ENCODE measurements at regions of chr2 and their contacts with region 1.

Region 1: DNA sequence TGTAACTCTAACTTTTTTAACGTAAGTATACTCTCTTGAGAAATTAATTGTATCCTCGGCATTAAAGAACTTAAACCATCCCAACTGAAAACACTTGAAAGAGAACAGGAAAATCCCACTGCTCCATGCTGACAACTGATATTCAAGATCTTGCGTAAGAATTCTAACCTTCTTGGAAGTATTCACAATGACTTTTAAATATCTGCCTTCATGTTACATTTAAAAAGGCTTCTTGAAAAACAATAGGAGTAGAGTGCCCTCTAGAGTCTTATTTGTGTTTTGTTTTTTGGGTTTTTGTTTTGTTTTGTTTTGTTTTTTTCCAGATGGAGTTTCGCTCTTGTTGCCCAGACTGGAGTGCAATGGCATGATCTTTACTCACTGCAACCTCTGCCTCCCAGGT is 65.4 kb upstream of the DNAJC10 start:
- DNase-seq: peak in 1 of 9 donors; percentile 15
- ATAC-seq: no peak
- H3K4me3 ChIP-seq: no peak overlapping the region
- H3K4me3 Mint-ChIP-seq: no peak overlapping the region
- H3K27ac ChIP-seq: no peak overlapping the region
- H3K27ac Mint-ChIP-seq: peak overlapping the region in 1 of 9 donors; percentile 37
- H3K4me1 ChIP-seq: no peaks in the 10 kb centered on the region
- H3K4me1 Mint-ChIP-seq: peaks cover 0 to 21% (median 9%) of the 10 kb centered on the region in 7 donors
- H3K27me3 ChIP-seq: no peaks in the 10 kb centered on the region
- H3K27me3 Mint-ChIP-seq: peaks cover 0 to 7% (median 0%) of the 10 kb centered on the region in 5 donors

Region 2: GRCh38 chr2:181742922-181743722 is 907.6 kb before region 1 on chr2:
- CTCF ChIA-PET with region 1: no interaction called
- POLR2A ChIA-PET with region 1: no interaction called
- intact Hi-C with region 1: loop called in 1 of 2 experiments (anchors 2 kb)
- DNase-seq: peak in 5 of 9 donors; percentile 17 to 35 (median 29)
- ATAC-seq: peak; percentile 49
- H3K4me3 ChIP-seq: no peak overlapping the region
- H3K4me3 Mint-ChIP-seq: no peak overlapping the region
- H3K27ac ChIP-seq: no peak overlapping the region
- H3K27ac Mint-ChIP-seq: no peak overlapping the region
- H3K4me1 ChIP-seq: no peaks in the 10 kb centered on the region
- H3K4me1 Mint-ChIP-seq: no peaks in the 10 kb centered on the region
- H3K27me3 ChIP-seq: no peaks in the 10 kb centered on the region
- H3K27me3 Mint-ChIP-seq: peaks cover 0 to 22% (median 3%) of the 10 kb centered on the region in 5 donors

Region 3: DNA sequence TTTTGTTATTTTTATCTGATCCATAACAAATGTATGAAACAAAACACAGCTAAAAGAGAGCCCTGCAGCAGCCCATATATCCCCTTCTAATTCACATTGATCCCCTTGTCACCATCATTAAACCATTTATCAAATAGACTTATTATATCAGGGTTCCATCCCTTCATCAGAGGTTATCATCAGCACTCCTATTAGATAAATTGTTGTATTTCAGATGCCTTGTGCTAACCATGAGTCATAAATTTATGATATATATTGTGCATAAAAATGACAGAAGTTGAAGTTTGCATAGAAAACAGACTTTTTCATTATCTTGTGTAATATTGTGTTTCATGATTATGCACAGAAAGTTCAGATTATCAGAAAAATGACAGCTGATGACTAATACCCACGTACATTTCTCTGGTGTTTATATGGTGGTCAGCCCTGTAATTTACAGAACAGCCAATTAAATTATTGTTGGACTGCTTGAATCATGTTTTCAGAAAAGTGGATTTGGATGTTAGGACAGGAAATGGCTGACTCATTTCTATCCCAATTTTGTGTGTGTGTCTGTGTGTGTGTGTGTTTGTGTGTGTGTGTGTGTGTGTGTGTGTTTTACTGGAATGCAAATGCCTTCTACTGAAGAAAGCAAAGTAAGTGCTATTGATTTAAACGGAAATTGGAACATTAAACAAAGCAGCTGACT is 584.2 kb before region 1 on chr2:
- CTCF ChIA-PET with region 1: no interaction called
- POLR2A ChIA-PET with region 1: no interaction called
- intact Hi-C with region 1: no loop called
- DNase-seq: no peak
- ATAC-seq: no peak
- H3K4me3 ChIP-seq: no peak overlapping the region
- H3K4me3 Mint-ChIP-seq: no peak overlapping the region
- H3K27ac ChIP-seq: no peak overlapping the region
- H3K27ac Mint-ChIP-seq: no peak overlapping the region
- H3K4me1 ChIP-seq: no peaks in the 10 kb centered on the region
- H3K4me1 Mint-ChIP-seq: no peaks in the 10 kb centered on the region
- H3K27me3 ChIP-seq: no peaks in the 10 kb centered on the region
- H3K27me3 Mint-ChIP-seq: peaks cover 0 to 13% (median 11%) of the 10 kb centered on the region in 5 donors

Region 4: GRCh38 chr2:182186132-182186735 is 464.5 kb before region 1 on chr2:
- CTCF ChIA-PET with region 1: interaction called, 7 read pairs
- POLR2A ChIA-PET with region 1: no interaction called
- intact Hi-C with region 1: loop called in 1 of 2 experiments (anchors 1 kb)
- DNase-seq: peak in 4 of 9 donors; percentile 10 to 41 (median 24)
- ATAC-seq: peak; percentile 63
- H3K4me3 ChIP-seq: no peak overlapping the region
- H3K4me3 Mint-ChIP-seq: no peak overlapping the region
- H3K27ac ChIP-seq: no peak overlapping the region
- H3K27ac Mint-ChIP-seq: no peak overlapping the region
- H3K4me1 ChIP-seq: no peaks in the 10 kb centered on the region
- H3K4me1 Mint-ChIP-seq: no peaks in the 10 kb centered on the region
- H3K27me3 ChIP-seq: no peaks in the 10 kb centered on the region
- H3K27me3 Mint-ChIP-seq: peaks cover 5 to 17% (median 9%) of the 10 kb centered on the region in 5 donors

Region 5: DNA sequence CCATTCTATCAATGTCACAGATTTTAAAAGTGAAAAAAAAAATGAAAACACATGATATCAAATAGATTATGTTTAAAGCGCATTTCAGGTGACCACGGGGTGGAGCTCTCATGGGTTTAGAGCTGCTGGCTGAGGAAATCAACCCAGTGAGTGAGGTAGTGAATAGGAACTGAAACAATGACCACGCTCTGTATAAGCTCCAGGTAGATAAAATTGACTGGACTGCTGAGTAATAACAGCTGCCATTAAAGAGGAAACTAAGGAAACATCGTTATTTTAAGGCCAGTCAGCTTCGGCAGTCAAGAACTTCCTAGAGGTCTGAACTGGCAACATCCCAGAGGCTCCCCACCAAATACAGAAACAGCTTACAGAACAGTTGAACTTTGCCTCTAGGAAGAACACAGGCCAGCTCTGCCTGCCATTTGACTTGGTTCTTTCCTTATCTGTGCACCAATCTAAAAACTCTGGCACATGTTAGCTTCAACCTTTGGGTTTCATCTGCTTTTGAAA is 409.8 kb before region 1 on chr2:
- CTCF ChIA-PET with region 1: interaction called, 4 read pairs
- POLR2A ChIA-PET with region 1: no interaction called
- intact Hi-C with region 1: loop called (anchors 1 to 2 kb)
- DNase-seq: no peak
- ATAC-seq: peak; percentile 40
- H3K4me3 ChIP-seq: no peak overlapping the region
- H3K4me3 Mint-ChIP-seq: no peak overlapping the region
- H3K27ac ChIP-seq: no peak overlapping the region
- H3K27ac Mint-ChIP-seq: no peak overlapping the region
- H3K4me1 ChIP-seq: no peaks in the 10 kb centered on the region
- H3K4me1 Mint-ChIP-seq: peaks cover 0 to 7% (median 0%) of the 10 kb centered on the region in 7 donors
- H3K27me3 ChIP-seq: no peaks in the 10 kb centered on the region
- H3K27me3 Mint-ChIP-seq: peaks cover 0 to 3% (median 0%) of the 10 kb centered on the region in 5 donors